Spleen (tissue), 13 donors: ENCODE measurements at regions of chr22 and their contacts with region 1.

Region 1: DNA sequence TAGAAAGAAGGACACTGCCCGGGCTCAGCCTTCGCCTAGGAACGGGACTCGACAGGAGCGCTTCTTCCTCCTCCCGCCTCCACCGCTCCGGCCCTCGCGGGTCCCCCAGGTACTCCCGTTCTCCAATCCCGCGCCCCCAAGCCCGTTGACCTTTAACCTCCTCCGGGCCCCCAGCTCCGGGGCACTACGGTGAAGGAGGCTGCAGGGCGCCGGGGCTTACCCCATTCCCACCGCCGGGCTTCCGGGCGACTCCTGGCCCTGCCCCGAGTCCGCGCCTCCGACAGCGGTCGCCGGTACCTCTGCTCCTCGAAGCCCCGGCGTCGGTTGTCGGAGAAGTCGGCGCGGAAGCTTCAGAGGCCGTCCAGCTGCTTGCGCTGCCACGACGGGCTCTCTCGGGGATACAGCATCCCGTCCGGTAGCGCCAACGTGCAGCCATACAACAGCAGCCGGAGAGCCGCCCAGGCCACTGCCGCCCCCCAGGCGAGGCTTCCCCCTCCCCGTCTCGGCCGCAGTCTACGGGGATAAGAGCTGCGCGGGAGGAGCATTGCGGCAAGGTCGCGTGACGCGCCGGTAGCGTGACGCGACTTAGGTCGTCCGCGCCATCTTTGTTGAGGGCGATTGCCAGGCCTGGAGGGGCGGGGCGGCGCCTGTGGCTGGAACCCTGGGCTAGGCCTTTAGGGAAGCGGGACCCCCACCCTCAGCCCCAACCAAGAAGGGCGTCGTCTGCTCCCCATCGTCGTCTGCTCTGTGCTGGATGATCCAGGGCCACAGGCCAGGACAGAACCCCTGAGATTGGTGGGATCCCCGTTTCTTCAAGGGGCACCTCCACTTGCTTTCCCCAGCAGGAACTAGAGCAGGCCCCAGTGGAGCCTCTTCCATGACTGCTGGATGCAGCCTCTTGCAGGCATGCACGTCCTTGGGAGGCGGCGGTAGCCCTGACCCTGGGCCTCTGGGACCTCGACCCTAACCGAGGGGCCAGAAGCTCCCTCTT is 26.3 kb downstream of the RGL4 start:
- DNase-seq: peak; percentile 96
- H3K4me3 ChIP-seq: peak overlapping the region; percentile 72 to 96 (median 81)
- H3K27ac ChIP-seq: peak overlapping the region; percentile 71 to 92 (median 83)
- H3K4me1 ChIP-seq: peaks cover 7 to 26% (median 21%) of the 10 kb centered on the region in 6 donors
- H3K27me3 ChIP-seq: no peaks in the 10 kb centered on the region
- CTCF ChIP-seq: peak in 3 of 11 experiments; percentile 15 to 25 (median 16)
- POLR2A ChIP-seq: peak in 1 of 3 donors; percentile 73

Region 2: DNA sequence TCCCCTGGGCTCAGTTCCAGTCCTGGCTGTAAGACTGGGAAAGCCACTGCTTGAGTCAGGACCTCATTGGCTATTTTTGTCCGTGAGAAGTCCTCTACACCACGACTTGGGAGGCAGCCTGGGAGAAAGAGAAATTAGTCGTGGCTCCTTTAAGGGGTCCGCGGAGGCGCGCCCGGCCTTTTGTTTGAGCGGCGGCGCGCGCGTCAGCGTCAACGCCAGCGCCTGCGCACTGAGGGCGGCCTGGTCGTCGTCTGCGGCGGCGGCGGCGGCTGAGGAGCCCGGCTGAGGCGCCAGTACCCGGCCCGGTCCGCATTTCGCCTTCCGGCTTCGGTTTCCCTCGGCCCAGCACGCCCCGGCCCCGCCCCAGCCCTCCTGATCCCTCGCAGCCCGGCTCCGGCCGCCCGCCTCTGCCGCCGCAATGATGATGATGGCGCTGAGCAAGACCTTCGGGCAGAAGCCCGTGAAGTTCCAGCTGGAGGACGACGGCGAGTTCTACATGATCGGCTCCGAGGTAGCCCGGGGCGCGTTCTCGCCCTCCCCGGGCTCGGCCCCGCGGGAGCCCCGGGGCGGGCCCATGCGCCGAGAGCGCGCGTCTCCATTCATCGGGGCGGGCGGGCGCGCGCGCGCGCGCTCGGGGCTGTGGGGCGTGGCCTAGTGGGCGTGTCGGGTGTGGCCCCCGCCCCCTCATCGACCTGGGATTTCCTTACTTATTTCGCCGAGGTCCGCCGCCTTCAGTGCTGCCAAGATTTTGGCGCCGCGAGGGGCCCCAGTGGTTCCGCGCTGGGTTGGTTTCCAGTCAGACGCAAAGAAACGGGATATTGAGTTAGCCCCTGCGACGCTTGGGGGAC is 69.9 kb after region 1 on chr22 and contains the start of gene SMARCB1:
- intact Hi-C with region 1: loop called (anchors 5 kb)
- DNase-seq: peak; percentile 96
- H3K4me3 ChIP-seq: peak within 1 kb of the TSS; percentile 58 to 93 (median 72)
- H3K27ac ChIP-seq: peak within 1 kb of the TSS; percentile 96 to 100 (median 99)
- H3K4me1 ChIP-seq: peaks cover 18 to 82% (median 43%) of the 10 kb centered on the region in 6 donors
- H3K27me3 ChIP-seq: no peaks in the 10 kb centered on the region
- CTCF ChIP-seq: no peak
- POLR2A ChIP-seq: peak; percentile 8 to 50 (median 39)
- total RNA-seq, gene SMARCB1: 72.8 to 166 (median 84.6) TPM

Region 3: GRCh38 chr22:23800297-23801237 is 83.5 kb after region 1 on chr22:
- intact Hi-C with region 1: no loop called
- DNase-seq: peak; percentile 86
- H3K4me3 ChIP-seq: peak overlapping the region in 1 of 8 donors; percentile 35
- H3K27ac ChIP-seq: peak overlapping the region; percentile 39 to 85 (median 70)
- H3K4me1 ChIP-seq: peaks cover 0 to 67% (median 45%) of the 10 kb centered on the region in 6 donors
- H3K27me3 ChIP-seq: no peaks in the 10 kb centered on the region
- CTCF ChIP-seq: no peak
- POLR2A ChIP-seq: no peak